Activated B cell treated with CpG ODN at 0.5 μM for 24 hours (primary cell): ENCODE measurements at regions of chr2 and their contacts with region 1.

Region 1: DNA sequence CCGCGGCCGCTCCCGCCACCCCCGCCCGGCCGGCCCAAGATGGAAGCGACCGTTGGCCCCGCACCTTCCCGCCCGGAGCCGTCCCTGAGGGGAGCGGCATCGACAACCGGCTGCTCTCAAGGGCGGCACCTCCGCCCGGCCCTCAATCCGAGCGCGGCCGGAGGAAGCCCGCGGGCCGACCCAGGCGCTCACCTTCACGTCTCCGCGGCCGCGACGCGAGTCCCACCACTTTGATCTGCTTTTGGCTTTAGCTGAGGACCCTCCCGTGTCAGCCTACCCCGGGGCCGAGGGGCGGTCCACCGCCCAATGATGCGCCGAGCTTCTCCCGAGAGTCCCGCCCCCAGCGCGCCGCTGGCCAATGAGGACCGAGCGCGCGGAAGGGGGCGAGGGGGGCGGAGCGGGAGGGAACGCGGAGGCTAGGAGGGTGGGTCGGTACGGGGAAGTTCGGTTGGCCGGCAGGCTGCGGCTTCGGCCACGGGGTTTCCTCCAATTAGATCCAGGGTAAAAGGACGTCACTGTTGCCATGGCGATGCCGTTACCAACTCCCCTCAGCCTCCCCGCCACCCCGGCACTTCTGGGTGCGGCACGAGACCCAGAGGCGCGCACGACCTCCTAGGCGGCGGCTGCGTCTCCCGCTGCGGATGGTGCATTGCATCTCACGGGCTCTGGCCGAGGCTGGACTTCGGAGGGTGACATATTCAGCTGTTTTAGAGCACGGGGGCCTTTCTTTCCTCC is at the start of gene YWHAQ:
- DNase-seq: peak; percentile 99
- ATAC-seq: peak; percentile 92
- H3K4me3 Mint-ChIP-seq: peak within 1 kb of the TSS; percentile 92
- H3K27ac Mint-ChIP-seq: peak within 1 kb of the TSS; percentile 89
- H3K4me1 Mint-ChIP-seq: peaks cover 52% of the 10 kb centered on the region
- H3K27me3 Mint-ChIP-seq: no peaks in the 10 kb centered on the region
- CTCF ChIP-seq: no peak
- total RNA-seq, gene YWHAQ: 164 and 166 TPM in 2 replicates

Region 2: GRCh38 chr2:9423100-9423921 is 207.6 kb before region 1 on chr2 and contains the starts of genes CPSF3 and ITGB1BP1:
- CTCF ChIA-PET with region 1: no interaction called
- POLR2A ChIA-PET with region 1: interaction called, 27 read pairs
- intact Hi-C with region 1: loop called (anchors 1 kb)
- DNase-seq: peak; percentile 96
- ATAC-seq: peak; percentile 86
- H3K4me3 Mint-ChIP-seq: no peak within 1 kb of the TSS
- H3K27ac Mint-ChIP-seq: peak within 1 kb of the TSS; percentile 91
- H3K4me1 Mint-ChIP-seq: peaks cover 22% of the 10 kb centered on the region
- H3K27me3 Mint-ChIP-seq: no peaks in the 10 kb centered on the region
- CTCF ChIP-seq: no peak
- total RNA-seq, gene CPSF3: 44.0 and 44.6 TPM in 2 replicates
- total RNA-seq, gene ITGB1BP1: 39.6 and 40.5 TPM in 2 replicates

Region 3: DNA sequence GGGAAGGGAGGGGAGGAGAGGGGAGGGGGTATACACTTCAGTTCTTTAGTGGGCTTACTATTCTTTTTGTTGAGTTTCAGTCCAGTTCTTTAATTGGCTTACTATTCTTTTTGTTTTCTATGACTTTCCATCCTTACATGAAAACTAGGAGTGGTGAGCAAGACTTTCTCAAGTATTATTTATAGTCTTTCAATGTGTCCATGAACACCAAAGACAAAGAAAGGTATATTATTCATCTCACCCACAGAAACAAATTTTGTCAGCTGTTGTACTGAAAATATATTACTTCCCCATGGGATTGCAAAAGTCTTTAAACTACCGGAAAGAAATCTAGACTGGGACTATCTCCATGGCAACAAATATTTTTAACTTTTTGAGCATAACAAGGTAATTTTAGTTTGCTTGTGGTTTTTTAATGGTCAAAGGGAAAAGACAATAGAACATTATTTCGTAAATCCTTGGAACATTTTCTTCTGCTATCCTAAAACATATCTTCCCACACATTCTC is 92.9 kb before region 1 on chr2:
- CTCF ChIA-PET with region 1: no interaction called
- POLR2A ChIA-PET with region 1: interaction called, 12 read pairs
- intact Hi-C with region 1: loop called (anchors 5 kb)
- DNase-seq: no peak
- ATAC-seq: no peak
- H3K4me3 Mint-ChIP-seq: peak overlapping the region; percentile 50
- H3K27ac Mint-ChIP-seq: peak overlapping the region; percentile 78
- H3K4me1 Mint-ChIP-seq: peaks cover 75% of the 10 kb centered on the region
- H3K27me3 Mint-ChIP-seq: no peaks in the 10 kb centered on the region
- CTCF ChIP-seq: no peak

Region 4: GRCh38 chr2:9573840-9574239 is 57.1 kb before region 1 on chr2:
- CTCF ChIA-PET with region 1: no interaction called
- POLR2A ChIA-PET with region 1: interaction called, 10 read pairs
- intact Hi-C with region 1: no loop called
- DNase-seq: no peak
- ATAC-seq: no peak
- H3K4me3 Mint-ChIP-seq: no peak overlapping the region
- H3K27ac Mint-ChIP-seq: no peak overlapping the region
- H3K4me1 Mint-ChIP-seq: no peaks in the 10 kb centered on the region
- H3K27me3 Mint-ChIP-seq: no peaks in the 10 kb centered on the region
- CTCF ChIP-seq: no peak

Region 5: DNA sequence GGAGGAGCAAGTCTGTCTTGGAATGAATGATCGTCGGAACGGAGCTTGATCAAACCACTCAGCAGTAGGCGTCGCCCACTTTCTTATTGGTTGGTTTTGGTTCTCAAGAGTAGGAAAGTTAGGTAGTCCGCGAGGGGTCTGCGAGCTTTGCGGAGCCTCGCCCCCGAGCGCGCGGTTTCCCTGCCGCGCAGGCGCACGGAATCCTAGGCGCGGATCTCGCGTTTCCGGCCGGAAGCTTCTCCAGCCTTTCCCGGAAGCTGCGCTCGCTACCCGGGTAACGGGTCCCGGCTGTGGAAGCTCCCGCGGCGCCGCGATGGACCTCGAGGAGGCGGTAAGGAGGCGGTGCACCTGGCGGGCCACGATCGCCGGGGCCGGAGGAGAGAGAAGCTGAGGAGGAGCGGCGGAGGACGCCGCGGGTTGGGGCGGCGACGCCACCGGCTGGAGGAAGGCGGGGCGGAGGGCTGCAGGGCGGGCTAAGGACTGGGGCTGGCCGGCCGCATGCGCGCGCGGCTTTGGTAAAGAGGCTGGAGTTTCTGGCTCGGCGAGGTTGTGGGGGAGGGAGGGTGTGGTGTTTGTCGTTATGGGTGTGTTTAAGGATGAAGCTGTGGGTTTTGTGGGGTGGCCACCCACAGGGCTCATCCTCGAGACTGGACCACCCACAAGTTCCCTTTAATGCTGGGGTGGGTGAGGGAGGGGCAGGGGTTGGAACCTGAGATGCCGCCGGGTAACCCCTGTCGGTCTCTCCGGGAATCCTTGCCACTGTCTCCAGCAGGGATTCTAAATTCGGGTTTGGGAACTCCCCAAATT is 212.5 kb after region 1 on chr2 and contains the start of gene TAF1B:
- CTCF ChIA-PET with region 1: no interaction called
- POLR2A ChIA-PET with region 1: interaction called, 10 read pairs
- intact Hi-C with region 1: loop called (anchors 1 kb)
- DNase-seq: peak; percentile 86
- ATAC-seq: peak; percentile 87
- H3K4me3 Mint-ChIP-seq: peak within 1 kb of the TSS; percentile 94
- H3K27ac Mint-ChIP-seq: peak within 1 kb of the TSS; percentile 91
- H3K4me1 Mint-ChIP-seq: peaks cover 34% of the 10 kb centered on the region
- H3K27me3 Mint-ChIP-seq: no peaks in the 10 kb centered on the region
- CTCF ChIP-seq: no peak
- total RNA-seq, gene TAF1B: 26.4 and 28.7 TPM in 2 replicates

Region 6: DNA sequence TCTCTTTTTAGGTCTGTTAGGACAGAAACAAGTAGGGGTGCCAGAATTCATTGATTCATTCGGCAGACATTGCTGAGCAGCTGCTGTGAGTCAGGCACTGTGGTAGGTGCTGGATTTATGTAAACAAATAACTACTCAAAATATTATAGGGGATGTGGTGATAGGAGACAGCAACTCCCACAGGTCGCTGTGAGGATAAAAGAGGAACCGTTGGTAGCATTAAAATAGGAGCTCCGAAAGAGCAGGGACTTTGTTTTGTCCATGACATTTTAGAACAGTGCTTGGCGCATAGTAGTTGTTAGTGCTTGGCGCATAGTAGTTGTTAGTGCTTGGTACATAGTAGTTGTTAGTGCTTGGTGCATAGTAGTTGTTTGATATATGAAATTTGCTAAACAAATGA is 1119.7 kb after region 1 on chr2:
- CTCF ChIA-PET with region 1: no interaction called
- POLR2A ChIA-PET with region 1: no interaction called
- intact Hi-C with region 1: loop called (anchors 2 kb)
- DNase-seq: no peak
- ATAC-seq: no peak
- H3K4me3 Mint-ChIP-seq: no peak overlapping the region
- H3K27ac Mint-ChIP-seq: no peak overlapping the region
- H3K4me1 Mint-ChIP-seq: peaks cover 18% of the 10 kb centered on the region
- H3K27me3 Mint-ChIP-seq: no peaks in the 10 kb centered on the region
- CTCF ChIP-seq: no peak